HepG2 (cell line): ENCODE measurements at regions of chr20 and their contacts with region 1.

Region 1: DNA sequence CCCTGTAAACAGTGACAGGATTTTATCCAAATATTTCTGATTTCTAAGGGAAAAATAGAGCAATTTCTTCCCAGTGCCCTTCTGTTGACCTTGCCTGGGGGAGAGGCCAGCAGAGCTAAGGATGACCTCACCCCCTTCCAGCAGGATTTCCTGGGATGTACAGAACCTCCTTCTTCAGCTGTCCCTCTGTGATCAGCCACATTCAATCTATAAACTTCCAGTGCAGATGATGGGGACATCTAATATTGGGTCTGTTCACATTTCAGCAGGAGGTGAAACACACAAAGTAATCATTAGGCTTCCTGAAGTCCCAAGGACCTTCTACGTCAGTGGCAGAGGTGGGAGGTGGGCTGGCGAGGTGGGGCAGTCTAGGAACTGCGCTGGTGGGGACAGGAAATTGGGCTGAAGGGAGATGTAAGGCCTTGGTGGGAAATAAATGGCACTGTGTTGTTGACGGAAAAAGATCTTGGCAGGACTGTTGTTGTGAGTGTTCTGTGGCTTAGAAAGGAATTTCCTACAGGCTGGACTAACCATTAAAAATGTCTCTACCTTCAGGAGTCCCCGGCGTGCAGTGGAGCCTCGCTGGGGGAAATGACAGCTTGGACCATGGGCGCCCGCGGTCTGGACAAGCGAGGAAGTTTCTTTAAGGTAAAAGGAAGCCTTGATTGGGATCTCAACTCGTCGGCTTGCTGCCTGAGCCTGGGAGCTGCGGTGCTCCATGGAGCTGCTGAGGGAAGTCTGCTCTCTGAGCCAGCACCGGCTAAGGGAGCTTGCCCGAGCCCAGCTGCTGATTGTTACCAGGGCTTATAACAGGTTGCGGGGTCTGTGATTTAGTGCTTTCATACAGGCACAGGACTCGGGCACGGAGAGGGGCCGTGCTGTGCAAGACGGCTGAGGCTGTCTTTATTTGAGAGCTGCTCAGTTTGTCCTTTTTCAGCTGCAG is 127.9 kb upstream of the NAA20 start:
- DNase-seq: no peak
- ATAC-seq: no peak
- H3K4me3 ChIP-seq: no peak overlapping the region; a peak in 2 of 6 replicates
- H3K27ac ChIP-seq: no peak overlapping the region
- H3K4me1 ChIP-seq: peaks cover 50% of the 10 kb centered on the region
- H3K27me3 ChIP-seq: peaks cover 0 to 17% of the 10 kb centered on the region in 2 experiments; a peak in 2 of 5 replicates
- CTCF ChIP-seq: no peak
- EP300 ChIP-seq: no peak
- POLR2A ChIP-seq: no peak
- RAD21 ChIP-seq: no peak

Region 2: DNA sequence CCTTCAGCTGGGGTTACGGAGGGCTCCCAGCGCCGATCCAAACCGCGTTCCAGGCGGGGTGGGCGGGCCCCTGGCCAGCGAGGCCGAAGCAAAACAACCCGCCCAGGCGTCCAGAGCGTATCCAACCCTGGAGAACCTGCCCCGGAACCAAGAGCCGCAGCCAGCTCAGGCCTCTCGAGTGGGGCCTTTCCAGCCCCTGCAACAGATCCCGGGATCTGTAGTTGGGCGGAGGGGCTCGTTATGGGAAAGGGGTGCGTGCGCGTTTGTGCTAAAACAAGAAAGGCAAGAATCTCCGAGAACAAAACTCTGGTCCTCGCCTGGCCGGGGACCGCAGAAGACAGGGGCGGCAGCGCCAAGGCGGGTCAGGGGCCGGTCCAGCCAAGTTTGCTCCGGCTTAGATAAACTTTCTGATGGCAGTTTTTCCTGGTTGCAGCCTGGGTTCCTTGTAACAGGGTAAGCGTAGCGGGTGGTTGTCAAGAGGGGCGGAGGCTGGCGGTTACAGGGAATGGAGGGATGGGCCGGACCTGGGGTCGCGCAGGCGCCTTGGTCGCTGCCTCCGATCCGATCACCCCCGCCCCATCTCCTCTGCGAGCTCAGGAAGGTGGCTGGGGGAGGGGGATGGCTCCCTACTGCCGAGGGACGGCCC is 131.7 kb before region 1 on chr20:
- CTCF ChIA-PET with region 1: no interaction called
- POLR2A ChIA-PET with region 1: interaction called, 20 read pairs
- in situ Hi-C with region 1: no loop called
- intact Hi-C with region 1: no loop called
- DNase-seq: peak; percentile 86
- ATAC-seq: peak; percentile 82
- H3K4me3 ChIP-seq: peak overlapping the region; percentile 61 to 85 (median 70)
- H3K27ac ChIP-seq: peak overlapping the region; percentile 61
- H3K4me1 ChIP-seq: peaks cover 37% of the 10 kb centered on the region
- H3K27me3 ChIP-seq: peaks cover 0 to 24% of the 10 kb centered on the region in 2 experiments; a peak in 3 of 5 replicates
- CTCF ChIP-seq: peak; percentile 20; the same call in 1 of the 2 replicates
- EP300 ChIP-seq: no peak; a peak in 1 of 4 replicates
- POLR2A ChIP-seq: peak in 1 of 2 experiments; percentile 13; a peak in 1 of 4 replicates
- RAD21 ChIP-seq: no peak

Region 3: DNA sequence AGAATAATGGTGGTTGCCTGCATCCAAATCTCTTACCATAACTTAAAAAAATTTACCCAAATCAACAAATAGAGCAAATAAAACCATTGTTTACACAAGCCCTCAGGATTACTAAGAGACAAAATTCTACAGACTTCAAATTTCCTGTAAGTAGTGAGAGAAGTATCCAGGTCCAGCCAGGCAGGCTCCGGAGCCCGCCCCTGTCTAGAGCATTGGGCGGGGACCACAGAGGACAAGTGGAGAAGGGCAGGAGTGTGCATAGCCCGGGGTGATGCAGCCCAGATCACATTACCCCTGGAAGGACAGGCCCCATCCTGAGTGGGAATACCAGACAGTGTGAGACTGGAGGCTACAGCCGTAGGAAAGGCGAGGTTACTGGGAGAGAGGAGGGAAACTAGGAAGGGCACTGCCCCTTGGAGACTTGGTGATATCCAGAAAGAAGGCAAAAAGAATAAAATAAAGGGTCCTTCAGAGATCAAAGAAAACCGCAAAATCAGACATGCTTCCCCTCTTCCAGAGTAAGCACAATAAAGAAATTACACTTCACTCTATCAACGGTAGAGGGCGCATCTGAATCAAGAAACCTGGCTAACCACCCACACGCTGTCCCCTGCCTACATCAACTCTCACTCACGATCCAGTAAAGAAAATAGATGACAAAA is 104.6 kb before region 1 on chr20:
- CTCF ChIA-PET with region 1: no interaction called
- POLR2A ChIA-PET with region 1: no interaction called
- in situ Hi-C with region 1: no loop called
- intact Hi-C with region 1: loop called (anchors 5 kb)
- DNase-seq: peak; percentile 75
- ATAC-seq: peak; percentile 91
- H3K4me3 ChIP-seq: 0 out of 6 replicates have a peak overlapping the region, but pooled peaks of 1 of the 3 experiments have one; percentile 2
- H3K27ac ChIP-seq: no peak overlapping the region
- H3K4me1 ChIP-seq: peaks cover 14% of the 10 kb centered on the region
- H3K27me3 ChIP-seq: no peaks in the 10 kb centered on the region
- CTCF ChIP-seq: peak; percentile 88
- EP300 ChIP-seq: no peak
- POLR2A ChIP-seq: no peak
- RAD21 ChIP-seq: peak; percentile 72

Region 4: DNA sequence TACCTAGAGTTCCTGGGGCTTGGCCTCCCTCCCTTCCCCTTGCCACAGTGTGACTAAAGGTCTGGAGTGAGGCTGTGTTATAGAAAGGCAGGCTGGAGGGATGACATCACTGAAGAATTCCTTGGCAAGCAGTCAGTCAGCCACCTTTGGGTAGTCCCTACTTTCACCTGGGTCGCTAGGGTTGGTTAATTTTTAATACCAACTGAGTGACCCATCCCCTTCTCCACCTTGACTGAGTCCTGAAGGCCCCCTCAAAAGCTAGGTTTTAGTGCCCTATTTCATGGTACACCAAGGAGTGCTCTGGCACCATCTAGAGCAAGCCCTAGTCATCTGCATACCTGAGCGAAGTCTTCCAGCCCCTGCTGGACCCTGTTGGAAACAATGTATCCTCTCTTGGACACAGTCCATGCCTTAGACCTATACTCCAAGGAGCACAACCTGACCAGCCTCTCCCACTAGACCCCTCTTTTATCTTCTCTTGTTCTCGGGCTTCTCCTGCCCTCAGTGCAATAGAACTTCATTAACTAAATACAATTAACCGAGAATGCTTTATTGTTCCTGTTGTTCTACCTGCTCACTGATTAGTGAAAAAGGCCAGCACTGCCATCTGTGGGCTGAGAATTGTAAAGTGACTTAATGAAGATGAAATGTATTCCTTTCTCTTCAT is 86.7 kb before region 1 on chr20:
- CTCF ChIA-PET with region 1: no interaction called
- POLR2A ChIA-PET with region 1: no interaction called
- in situ Hi-C with region 1: no loop called
- intact Hi-C with region 1: loop called (anchors 5 kb)
- DNase-seq: peak; percentile 75
- ATAC-seq: peak; percentile 100
- H3K4me3 ChIP-seq: no peak overlapping the region
- H3K27ac ChIP-seq: no peak overlapping the region
- H3K4me1 ChIP-seq: no peaks in the 10 kb centered on the region
- H3K27me3 ChIP-seq: no peaks in the 10 kb centered on the region
- CTCF ChIP-seq: peak; percentile 72
- EP300 ChIP-seq: no peak
- POLR2A ChIP-seq: no peak
- RAD21 ChIP-seq: peak; percentile 51

Region 5: DNA sequence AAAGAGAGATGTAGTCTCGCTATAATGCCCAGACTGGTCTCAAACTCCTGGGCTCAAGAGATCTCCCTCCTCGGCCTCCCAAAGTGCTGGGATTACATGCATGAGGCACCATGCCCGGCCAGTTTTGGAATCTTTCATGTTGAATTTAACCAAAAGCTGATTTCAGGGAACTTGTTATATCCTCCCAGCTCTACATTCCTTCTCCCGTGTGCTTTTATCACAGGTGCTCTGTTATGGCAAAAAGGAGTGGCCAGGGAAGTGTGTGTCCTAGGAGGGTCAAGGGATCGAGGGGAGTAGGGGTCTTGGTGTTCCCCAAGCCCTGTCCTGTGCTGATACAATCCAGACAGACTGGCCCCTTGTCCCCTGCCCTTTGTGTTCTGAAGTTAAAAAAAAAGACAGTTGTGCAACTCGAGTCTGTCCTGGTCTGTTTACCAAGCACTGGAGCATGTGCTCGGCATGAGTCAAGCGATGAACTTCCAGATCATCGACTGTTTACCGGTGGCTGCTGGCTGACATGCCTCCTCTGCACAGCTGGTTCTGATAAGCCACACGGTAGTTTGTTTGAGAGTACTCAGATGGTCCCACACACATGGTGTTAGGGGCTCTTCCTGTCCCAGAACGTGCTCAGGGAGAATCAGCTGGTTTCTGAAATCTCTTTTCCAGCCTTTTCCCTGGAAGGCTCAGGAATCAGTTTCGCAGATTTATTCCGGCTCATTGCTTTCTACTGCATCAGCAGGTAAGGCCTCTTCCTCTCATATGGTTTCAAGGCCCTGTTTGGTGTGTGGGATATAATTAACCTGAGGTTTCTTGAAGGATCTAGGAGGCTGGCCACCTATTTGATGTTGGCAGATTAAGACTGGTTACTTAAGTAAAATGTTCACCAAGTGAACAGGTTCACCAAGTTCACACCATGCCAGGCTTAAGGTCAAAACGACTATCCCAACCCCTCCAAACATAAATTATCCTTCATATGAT is 75.3 kb after region 1 on chr20:
- CTCF ChIA-PET with region 1: no interaction called
- POLR2A ChIA-PET with region 1: interaction called, 3 read pairs
- in situ Hi-C with region 1: no loop called
- intact Hi-C with region 1: loop called (anchors 1 kb)
- DNase-seq: peak; percentile 99
- ATAC-seq: peak; percentile 97
- H3K4me3 ChIP-seq: peak overlapping the region in 1 of 3 experiments; percentile 15; a peak in 1 of 6 replicates
- H3K27ac ChIP-seq: peak overlapping the region; percentile 72
- H3K4me1 ChIP-seq: peaks cover 74% of the 10 kb centered on the region
- H3K27me3 ChIP-seq: no peaks in the 10 kb centered on the region
- CTCF ChIP-seq: peak; percentile 34; the same call in 1 of the 2 replicates
- EP300 ChIP-seq: peak; percentile 96 to 99
- POLR2A ChIP-seq: peak in 1 of 2 experiments; percentile 43; a peak in 1 of 4 replicates
- RAD21 ChIP-seq: peak; percentile 27; the same call in 1 of the 2 replicates

Region 6: DNA sequence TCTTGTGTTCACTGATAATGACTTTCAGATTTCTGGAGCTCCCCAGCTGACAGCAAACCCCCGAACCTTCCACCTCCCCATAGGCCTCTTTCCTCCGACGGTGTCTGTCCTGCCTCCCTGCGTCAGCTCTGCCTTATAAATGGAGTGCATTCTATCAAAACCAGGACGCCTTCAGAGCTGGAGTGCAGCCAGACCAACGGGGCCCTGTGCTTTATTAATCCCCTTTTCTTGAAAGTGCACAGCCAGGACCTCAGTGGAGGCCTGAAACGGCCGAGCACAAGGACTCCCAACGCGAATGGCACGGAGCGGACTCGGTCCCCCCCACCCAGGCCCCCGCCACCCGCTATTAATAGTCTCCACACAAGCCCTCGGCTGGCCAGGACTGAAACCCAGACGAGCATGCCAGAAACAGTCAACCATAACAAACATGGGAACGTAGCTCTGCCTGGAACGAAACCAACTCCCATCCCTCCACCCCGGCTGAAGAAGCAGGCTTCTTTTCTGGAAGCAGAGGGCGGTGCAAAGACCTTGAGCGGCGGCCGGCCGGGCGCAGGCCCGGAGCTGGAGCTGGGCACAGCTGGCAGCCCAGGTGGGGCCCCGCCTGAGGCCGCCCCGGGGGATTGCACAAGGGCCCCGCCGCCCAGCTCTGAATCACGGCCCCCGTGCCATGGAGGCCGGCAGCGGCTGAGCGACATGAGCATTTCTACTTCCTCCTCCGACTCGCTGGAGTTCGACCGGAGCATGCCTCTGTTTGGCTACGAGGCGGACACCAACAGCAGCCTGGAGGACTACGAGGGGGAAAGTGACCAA is 85.5 kb after region 1 on chr20:
- CTCF ChIA-PET with region 1: no interaction called
- POLR2A ChIA-PET with region 1: no interaction called
- in situ Hi-C with region 1: no loop called
- intact Hi-C with region 1: no loop called
- DNase-seq: no peak
- ATAC-seq: no peak
- H3K4me3 ChIP-seq: no peak overlapping the region
- H3K27ac ChIP-seq: no peak overlapping the region
- H3K4me1 ChIP-seq: peaks cover 34% of the 10 kb centered on the region
- H3K27me3 ChIP-seq: no peaks in the 10 kb centered on the region
- CTCF ChIP-seq: no peak
- EP300 ChIP-seq: no peak
- POLR2A ChIP-seq: no peak
- RAD21 ChIP-seq: no peak

Region 7: DNA sequence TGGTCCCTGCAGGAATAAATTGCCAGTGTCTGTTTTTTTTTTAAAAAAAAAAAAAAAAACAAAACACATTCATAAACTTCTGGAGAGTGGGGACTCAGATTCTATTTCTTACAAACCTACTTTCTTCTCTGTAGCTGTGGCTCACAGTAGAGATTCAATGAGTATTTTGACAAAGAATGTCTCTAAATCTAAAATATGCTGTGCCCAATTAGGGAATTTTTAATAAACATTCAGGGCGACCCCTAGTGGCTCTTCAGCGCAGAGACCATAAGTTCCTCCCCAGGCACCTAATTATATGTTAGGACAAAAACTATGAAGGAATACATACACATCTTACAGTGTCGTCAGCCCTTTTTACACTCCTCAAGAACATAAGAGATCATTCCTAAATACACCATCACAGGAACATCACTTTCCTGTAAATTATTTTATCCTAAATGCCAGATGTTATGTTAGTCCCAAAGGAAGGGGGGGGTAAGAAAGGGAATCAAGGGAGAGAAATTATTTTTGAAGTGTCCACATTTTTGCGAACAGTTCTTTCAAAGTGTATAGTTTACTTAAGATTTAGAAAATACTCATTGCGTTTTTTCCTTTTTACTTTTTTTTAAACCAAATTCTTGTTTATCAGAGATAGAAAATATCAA is 106.1 kb after region 1 on chr20:
- CTCF ChIA-PET with region 1: no interaction called
- POLR2A ChIA-PET with region 1: no interaction called
- in situ Hi-C with region 1: no loop called
- intact Hi-C with region 1: loop called (anchors 5 kb)
- DNase-seq: peak; percentile 63
- ATAC-seq: peak; percentile 55; the same call in 2 of the 3 replicates
- H3K4me3 ChIP-seq: no peak overlapping the region
- H3K27ac ChIP-seq: no peak overlapping the region
- H3K4me1 ChIP-seq: peaks cover 38% of the 10 kb centered on the region
- H3K27me3 ChIP-seq: no peaks in the 10 kb centered on the region
- CTCF ChIP-seq: peak; percentile 85
- EP300 ChIP-seq: no peak
- POLR2A ChIP-seq: no peak
- RAD21 ChIP-seq: peak; percentile 78

Region 8: DNA sequence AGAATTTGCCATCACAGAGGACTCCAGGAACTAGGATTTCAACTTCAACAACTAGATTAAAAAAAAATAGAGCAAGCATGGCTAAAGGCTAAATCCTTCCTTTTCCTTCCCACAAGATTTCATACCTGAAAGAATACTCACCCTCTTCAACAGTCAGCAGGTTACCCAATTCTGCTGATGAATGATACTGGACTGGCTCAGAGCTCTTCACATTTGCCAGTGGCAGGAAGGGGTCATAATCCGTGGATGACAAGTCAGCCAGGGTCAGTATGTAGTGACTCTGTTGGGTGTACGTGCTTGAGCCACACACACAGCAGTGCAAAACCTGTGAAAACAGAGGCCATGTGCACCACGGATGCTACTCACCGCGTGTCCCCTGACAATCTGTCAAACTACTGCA is 631.5 kb after region 1 on chr20:
- CTCF ChIA-PET with region 1: no interaction called
- POLR2A ChIA-PET with region 1: no interaction called
- in situ Hi-C with region 1: no loop called
- intact Hi-C with region 1: no loop called
- DNase-seq: no peak
- ATAC-seq: no peak
- H3K4me3 ChIP-seq: no peak overlapping the region
- H3K27ac ChIP-seq: no peak overlapping the region
- H3K4me1 ChIP-seq: peaks cover 15% of the 10 kb centered on the region
- H3K27me3 ChIP-seq: no peaks in the 10 kb centered on the region
- CTCF ChIP-seq: no peak
- EP300 ChIP-seq: no peak
- POLR2A ChIP-seq: no peak
- RAD21 ChIP-seq: no peak